ENCODE measurements at regions of chr3 and their contacts with region 1.

Region 1: GRCh38 chr3:12841149-12841970 is at the start of gene RPL32:
- DNase-seq: peak; percentile 91
- ATAC-seq: peak; percentile 91
- H3K4me3 Mint-ChIP-seq: peak within 1 kb of the TSS; percentile 96
- H3K27ac Mint-ChIP-seq: peak within 1 kb of the TSS; percentile 99
- H3K4me1 Mint-ChIP-seq: peaks cover 48% of the 10 kb centered on the region
- H3K27me3 Mint-ChIP-seq: peaks cover 2% of the 10 kb centered on the region
- total RNA-seq, gene RPL32: 1,764 to 1,890 TPM

Region 2: DNA sequence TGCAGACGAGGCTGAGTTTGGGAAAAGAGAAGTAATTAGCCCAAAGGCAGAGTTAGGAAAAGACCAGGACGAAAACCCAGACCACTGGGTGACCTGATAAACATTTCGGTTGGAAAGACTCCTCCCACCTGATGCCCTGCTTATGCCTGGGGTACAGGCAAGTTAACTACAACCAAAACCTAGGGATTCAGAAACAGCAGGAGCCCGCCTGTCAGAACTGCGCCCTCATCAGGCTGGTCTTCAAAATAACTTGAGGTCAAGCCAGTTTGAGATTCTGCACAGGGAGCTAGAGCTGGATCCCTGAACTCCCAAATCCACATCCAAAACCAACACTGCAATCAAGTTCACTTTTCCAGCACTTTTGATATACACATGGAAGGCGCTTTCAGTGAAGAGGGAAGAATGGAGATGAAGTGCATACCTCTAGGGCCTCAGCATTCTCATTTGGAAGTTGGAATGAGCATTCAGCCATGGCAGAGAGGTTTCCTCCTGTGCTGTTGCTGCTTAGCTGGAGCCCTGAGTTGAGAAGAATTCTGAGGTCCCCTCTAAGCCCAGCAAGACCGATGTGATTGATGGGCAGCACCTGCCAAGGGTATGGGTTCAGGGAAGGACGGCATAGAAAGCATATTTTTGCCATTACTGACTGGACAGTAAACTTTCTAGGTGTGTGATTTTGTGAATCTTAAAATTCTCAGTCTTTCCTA is 345.5 kb before region 1 on chr3:
- CTCF ChIA-PET with region 1: no interaction called
- POLR2A ChIA-PET with region 1: no interaction called
- DNase-seq: no peak
- ATAC-seq: no peak
- H3K4me3 Mint-ChIP-seq: no peak overlapping the region
- H3K27ac Mint-ChIP-seq: no peak overlapping the region
- H3K4me1 Mint-ChIP-seq: no peaks in the 10 kb centered on the region
- H3K27me3 Mint-ChIP-seq: no peaks in the 10 kb centered on the region

Region 3: DNA sequence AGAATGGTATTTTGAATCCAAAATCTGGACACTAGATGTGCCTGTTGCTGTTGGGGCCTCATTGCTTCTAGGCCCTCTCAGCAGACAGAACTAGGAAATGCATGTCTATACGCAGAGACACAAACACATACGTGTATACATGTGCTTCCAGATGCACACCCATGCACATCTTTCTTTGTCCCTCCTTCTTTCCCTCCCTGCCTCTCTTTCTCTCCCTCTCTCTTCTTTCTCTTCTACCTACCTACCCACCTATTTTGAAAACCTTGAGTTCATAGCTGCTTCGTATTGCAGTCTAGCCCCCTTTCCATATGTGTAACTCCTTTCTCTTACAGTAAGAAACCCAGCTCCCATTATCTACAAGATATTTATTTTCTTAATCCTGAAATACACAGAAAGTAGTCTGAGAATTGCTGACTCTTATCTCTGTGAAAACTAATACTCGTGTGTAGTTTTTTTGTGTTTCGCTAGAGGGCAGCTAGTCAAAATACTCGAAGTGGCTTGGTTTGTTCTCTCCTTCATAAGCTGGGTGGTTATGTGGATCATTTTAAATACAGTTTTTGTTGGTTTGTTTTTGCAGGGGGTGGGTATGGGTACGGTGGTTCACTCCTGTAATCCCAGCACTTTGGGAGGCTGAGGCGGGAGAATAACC is 18.5 kb before region 1 on chr3:
- CTCF ChIA-PET with region 1: interaction called, 13 read pairs
- POLR2A ChIA-PET with region 1: interaction called, 3 read pairs
- DNase-seq: no peak
- ATAC-seq: no peak
- H3K4me3 Mint-ChIP-seq: no peak overlapping the region
- H3K27ac Mint-ChIP-seq: no peak overlapping the region
- H3K4me1 Mint-ChIP-seq: no peaks in the 10 kb centered on the region
- H3K27me3 Mint-ChIP-seq: no peaks in the 10 kb centered on the region

Region 4: GRCh38 chr3:12852201-12852600 is 10.8 kb after region 1 on chr3:
- CTCF ChIA-PET with region 1: interaction called, 11 read pairs
- POLR2A ChIA-PET with region 1: no interaction called
- DNase-seq: no peak
- ATAC-seq: no peak
- H3K4me3 Mint-ChIP-seq: no peak overlapping the region
- H3K27ac Mint-ChIP-seq: no peak overlapping the region
- H3K4me1 Mint-ChIP-seq: no peaks in the 10 kb centered on the region
- H3K27me3 Mint-ChIP-seq: peaks cover 23% of the 10 kb centered on the region

Region 5: DNA sequence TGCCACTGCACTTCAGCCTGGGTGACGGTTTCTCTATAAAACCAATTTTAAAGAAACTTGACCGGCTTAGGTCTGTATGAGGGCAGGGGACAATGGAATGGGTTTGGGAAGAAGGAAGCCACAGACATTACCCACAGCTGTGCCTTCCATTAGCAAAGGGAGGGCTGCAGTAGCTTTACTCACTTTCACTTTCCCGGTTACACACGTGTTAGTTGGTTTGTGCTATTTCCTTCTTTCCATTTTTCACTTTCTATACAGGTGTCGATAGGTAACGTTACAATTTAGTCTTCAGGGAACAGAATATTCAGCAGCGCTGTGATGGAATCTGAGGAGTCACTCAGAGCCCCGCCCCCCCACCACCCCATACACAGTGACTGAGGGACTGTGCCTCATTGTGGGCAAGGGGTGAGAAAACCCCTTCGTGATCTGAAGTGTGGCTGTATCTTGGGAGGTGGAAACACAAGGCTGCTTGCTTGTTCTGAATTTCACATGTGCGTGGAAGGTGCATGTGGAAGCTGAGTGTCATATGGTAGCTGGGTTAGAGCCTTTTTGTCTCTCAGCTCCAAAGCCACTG is 44.8 kb after region 1 on chr3:
- CTCF ChIA-PET with region 1: interaction called, 20 read pairs
- POLR2A ChIA-PET with region 1: interaction called, 7 read pairs
- DNase-seq: peak; percentile 35
- ATAC-seq: peak; percentile 63
- H3K4me3 Mint-ChIP-seq: peak overlapping the region; percentile 10
- H3K27ac Mint-ChIP-seq: peak overlapping the region; percentile 4
- H3K4me1 Mint-ChIP-seq: peaks cover 13% of the 10 kb centered on the region
- H3K27me3 Mint-ChIP-seq: peaks cover 31% of the 10 kb centered on the region

Region 6: DNA sequence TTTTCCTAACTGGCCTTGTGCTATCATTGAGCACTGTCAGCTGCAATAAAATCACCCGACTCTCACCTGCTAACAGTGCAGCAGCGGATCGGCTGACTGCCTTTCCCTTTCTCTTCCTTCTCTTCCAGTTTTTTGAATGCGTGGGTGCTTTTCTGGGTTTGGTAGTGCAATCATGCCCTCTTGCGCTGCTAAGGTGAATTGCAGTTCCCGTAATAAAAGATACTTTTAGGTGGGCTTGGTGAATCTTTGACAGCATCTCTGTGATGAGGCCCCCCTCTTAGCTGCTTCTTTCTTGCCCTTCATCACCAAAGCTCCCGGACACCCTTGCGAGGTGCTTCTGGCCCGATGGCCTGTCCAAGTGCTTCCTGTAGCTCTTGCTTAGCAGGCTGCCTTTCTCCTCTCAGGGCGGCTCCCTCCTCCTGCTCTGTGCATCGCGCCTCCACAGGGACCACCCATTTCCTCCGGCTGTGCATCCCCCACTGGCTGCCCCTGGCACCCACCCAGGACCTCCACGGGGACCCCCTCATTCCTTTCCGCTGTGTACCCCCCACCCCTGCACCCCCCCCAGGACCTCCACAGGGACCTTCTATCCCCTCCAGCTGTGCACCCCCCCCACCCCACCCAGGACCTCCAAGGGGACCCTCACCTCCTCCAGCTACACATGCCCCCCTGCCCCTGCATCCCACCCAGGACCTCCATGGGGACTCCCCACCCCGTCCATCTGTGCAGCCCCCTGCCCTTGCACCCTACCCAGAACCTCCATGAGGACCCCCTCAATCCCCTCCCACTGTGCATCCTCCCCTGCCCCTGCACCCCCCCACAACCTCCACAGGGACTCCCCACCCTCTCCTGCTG is 50.9 kb after region 1 on chr3:
- CTCF ChIA-PET with region 1: interaction called, 20 read pairs
- POLR2A ChIA-PET with region 1: interaction called, 7 read pairs
- DNase-seq: peak; percentile 57
- ATAC-seq: peak; percentile 37
- H3K4me3 Mint-ChIP-seq: no peak overlapping the region
- H3K27ac Mint-ChIP-seq: no peak overlapping the region
- H3K4me1 Mint-ChIP-seq: peaks cover 3% of the 10 kb centered on the region
- H3K27me3 Mint-ChIP-seq: peaks cover 27% of the 10 kb centered on the region

Region 7: GRCh38 chr3:12905316-12906071 is 64.1 kb after region 1 on chr3:
- CTCF ChIA-PET with region 1: no interaction called
- POLR2A ChIA-PET with region 1: no interaction called
- DNase-seq: no peak
- ATAC-seq: no peak
- H3K4me3 Mint-ChIP-seq: no peak overlapping the region
- H3K27ac Mint-ChIP-seq: no peak overlapping the region
- H3K4me1 Mint-ChIP-seq: peaks cover 13% of the 10 kb centered on the region
- H3K27me3 Mint-ChIP-seq: no peaks in the 10 kb centered on the region

Measured in activated CD8-positive, alpha-beta T cell treated with anti-CD3 and anti-CD28 coated beads, Interleukin-2, amount 10 ng/mL, durations not matched to agents 7 days and 5 days (primary cell).